CD8-positive, alpha-beta T cell (primary cell): ENCODE measurements at regions of chr1 and their contacts with region 1.

Region 1: DNA sequence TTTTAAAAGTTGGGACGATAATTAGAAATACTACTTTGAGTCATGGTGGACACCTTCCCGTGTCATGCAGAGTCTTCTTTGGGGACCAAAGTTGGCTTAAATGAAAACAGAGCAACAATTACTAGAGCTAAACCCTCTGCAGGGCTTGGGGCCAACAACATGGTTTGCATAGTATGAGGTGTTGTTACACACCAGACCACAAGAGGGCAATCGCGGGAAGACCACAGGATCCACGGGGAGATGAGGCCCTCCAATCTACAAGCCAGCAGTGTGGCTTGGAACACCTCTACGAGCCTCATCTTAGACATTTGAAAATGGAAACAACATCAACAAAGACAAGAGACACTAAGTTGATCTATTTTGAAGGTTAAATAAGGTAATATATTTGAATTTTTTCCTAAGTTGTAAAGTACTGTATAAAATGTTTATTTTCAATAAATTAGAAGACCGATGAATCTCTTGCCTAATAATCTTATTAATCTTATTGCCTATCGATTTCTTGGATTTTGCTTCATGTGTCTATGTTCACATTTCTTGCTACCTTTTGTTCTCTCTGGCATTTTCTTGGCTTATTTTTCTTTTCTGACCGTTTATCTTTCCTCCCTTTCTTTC is 8.2 kb upstream of the SMCP start:
- DNase-seq: peak in 8 of 9 experiments; percentile 35 to 65 (median 47)
- ATAC-seq: peak; percentile 40
- H3K4me3 ChIP-seq: no peak overlapping the region
- H3K4me3 Mint-ChIP-seq: no peak overlapping the region
- H3K27ac ChIP-seq: no peak overlapping the region
- H3K27ac Mint-ChIP-seq: no peak overlapping the region
- H3K4me1 ChIP-seq: no peaks in the 10 kb centered on the region
- H3K4me1 Mint-ChIP-seq: no peaks in the 10 kb centered on the region
- H3K27me3 ChIP-seq: no peaks in the 10 kb centered on the region
- H3K27me3 Mint-ChIP-seq: peaks cover 5% of the 10 kb centered on the region
- CTCF ChIP-seq: peak; percentile 73

Region 2: DNA sequence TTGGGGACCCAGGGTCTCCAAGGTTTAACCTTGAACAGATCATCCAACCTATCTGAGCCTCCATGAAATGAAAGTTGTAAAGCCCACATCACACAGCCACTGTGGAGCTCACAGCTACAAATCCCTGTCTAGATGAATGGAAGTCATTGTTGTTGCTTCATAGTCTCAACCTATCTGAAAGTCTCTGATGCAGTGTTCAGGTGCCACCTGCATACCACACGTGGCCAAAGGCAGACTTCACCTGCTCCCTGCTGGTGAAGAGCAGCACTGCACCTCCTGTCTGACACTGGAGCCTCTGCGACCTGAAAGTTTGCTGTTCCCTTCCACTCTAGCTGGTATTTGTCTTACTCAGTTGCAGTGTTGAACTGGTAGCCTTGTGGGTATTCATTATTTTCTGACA is 407.9 kb after region 1 on chr1:
- CTCF ChIA-PET with region 1: no interaction called
- POLR2A ChIA-PET with region 1: no interaction called
- intact Hi-C with region 1: loop called in 1 of 2 experiments (anchors 10 kb)
- DNase-seq: peak in 5 of 9 experiments; percentile 15 to 53 (median 33)
- ATAC-seq: peak; percentile 42
- H3K4me3 ChIP-seq: no peak overlapping the region
- H3K4me3 Mint-ChIP-seq: no peak overlapping the region
- H3K27ac ChIP-seq: no peak overlapping the region
- H3K27ac Mint-ChIP-seq: no peak overlapping the region
- H3K4me1 ChIP-seq: no peaks in the 10 kb centered on the region
- H3K4me1 Mint-ChIP-seq: no peaks in the 10 kb centered on the region
- H3K27me3 ChIP-seq: peaks cover 0 to 4% of the 10 kb centered on the region in 2 experiments
- H3K27me3 Mint-ChIP-seq: peaks cover 28% of the 10 kb centered on the region
- CTCF ChIP-seq: peak; percentile 49